Dorsolateral prefrontal cortex (tissue), 120 donors: ENCODE measurements at regions of chr7 and their contacts with region 1.

Region 1: GRCh38 chr7:155190688-155191087 is 107.0 kb upstream of the INSIG1 start:
- DNase-seq: peak in 4 of 10 donors; percentile 54 to 73 (median 65)
- H3K4me3 ChIP-seq: peak overlapping the region in 36 of 59 donors; percentile 8 to 63 (median 41)
- H3K27ac ChIP-seq: no peak overlapping the region
- H3K27me3 ChIP-seq: peaks cover 0 to 10% (median 0%) of the 10 kb centered on the region in 45 donors
- CTCF ChIP-seq: peak; percentile 52 to 89 (median 82)

Region 2: DNA sequence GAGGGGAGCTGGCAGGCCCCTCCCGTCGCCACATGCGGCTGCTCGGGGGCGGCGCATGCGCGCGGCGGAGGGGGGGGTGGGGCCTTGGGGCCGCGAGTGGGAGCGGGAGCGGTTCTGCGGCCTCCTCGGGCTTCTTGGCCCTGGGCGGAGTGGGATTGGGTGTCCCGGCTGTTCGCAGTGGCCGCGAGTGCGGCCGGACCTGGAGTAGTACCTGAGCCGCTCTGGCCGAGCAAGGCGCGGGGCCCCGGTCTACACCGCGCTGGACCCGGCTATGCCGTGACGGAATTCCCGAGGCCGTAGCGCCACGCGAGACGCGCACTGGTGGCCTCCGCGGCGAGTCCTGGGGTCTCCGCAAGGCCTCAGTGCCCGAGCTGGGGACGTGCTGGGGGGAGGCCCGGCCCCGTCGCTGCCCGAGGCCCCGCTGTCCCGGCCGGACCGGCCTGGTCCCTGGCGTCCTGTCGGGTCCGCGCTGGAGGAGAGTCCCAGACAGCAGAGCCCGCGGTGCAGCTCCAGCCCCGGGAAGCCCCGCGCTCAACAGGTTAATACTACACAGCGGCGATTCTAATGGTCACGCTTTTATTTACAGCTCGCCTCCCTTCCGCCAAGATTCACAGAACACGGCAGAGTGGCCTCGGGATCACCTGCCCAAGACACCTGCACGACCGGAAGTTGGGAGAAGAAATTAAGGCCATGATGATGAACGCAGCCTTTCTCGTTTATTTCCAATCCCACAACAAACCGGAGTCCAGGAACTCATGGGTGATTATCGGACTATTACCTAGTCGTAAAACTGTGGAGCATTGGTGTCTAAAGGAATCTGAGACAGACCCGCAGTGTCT is 187.1 kb before region 1 on chr7:
- intact Hi-C with region 1: no loop called
- DNase-seq: peak; percentile 42 to 92 (median 66)
- H3K4me3 ChIP-seq: peak overlapping the region; percentile 55 to 100 (median 96)
- H3K27ac ChIP-seq: peak overlapping the region in 58 of 59 donors; percentile 68 to 99 (median 94)
- H3K27me3 ChIP-seq: no peaks in the 10 kb centered on the region
- CTCF ChIP-seq: peak in 24 of 56 donors; percentile 5 to 46 (median 18)

Region 3: GRCh38 chr7:155252444-155252887 is 61.8 kb after region 1 on chr7:
- intact Hi-C with region 1: loop called in 1 of 2 experiments (anchors 5 kb)
- DNase-seq: no peak
- H3K4me3 ChIP-seq: no peak overlapping the region
- H3K27ac ChIP-seq: no peak overlapping the region
- H3K27me3 ChIP-seq: peaks cover 0 to 13% (median 0%) of the 10 kb centered on the region in 45 donors
- CTCF ChIP-seq: peak in 9 of 56 donors; percentile 9 to 48 (median 13)

Region 4: GRCh38 chr7:155344600-155345433 is 154.1 kb after region 1 on chr7:
- intact Hi-C with region 1: loop called (anchors 1 to 2 kb)
- DNase-seq: peak; percentile 60 to 90 (median 70)
- H3K4me3 ChIP-seq: peak overlapping the region in 57 of 59 donors; percentile 26 to 66 (median 49)
- H3K27ac ChIP-seq: no peak overlapping the region
- H3K27me3 ChIP-seq: peaks cover 0 to 18% (median 10%) of the 10 kb centered on the region in 45 donors
- CTCF ChIP-seq: peak; percentile 45 to 99 (median 85)